PC-9 (cell line): ENCODE measurements at regions of chr7 and their contacts with region 1.

Region 1: GRCh38 chr7:107150375-107151073 is 18.3 kb upstream of the HBP1 start:
- DNase-seq: peak; percentile 45 to 70
- H3K4me3 ChIP-seq: no peak overlapping the region
- H3K27ac ChIP-seq: no peak overlapping the region
- H3K4me1 ChIP-seq: peaks cover 12% of the 10 kb centered on the region; the same call in 1 of the 2 replicates
- H3K27me3 ChIP-seq: no peaks in the 10 kb centered on the region
- CTCF ChIP-seq: peak; percentile 87

Region 2: DNA sequence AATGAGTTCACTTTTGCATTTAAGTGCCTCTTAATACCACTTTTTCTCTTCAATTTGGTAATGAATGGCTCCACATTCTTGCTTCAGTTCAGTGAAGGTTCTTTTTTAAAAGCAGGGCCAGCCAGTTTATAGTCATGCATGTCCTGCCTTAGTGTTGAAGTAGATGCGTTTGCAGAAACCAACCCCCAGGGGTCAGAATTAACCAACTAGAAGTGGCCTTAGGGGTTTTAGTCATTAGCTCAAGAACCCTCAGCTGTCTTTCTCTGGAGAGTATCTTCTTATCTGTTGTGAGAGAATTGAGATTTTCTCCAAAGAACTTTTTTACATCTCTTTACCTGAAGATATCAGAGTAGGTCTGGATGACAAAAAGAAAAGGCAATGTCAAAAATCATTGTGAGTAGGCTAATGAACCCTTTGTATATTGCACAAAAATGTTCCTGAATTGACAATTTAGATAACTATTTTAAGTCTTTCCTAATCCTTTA is 203.2 kb before region 1 on chr7:
- CTCF ChIA-PET with region 1: interaction called, 22 read pairs
- POLR2A ChIA-PET with region 1: no interaction called
- intact Hi-C with region 1: loop called (anchors 1 kb)
- DNase-seq: peak; percentile 50 to 60
- H3K4me3 ChIP-seq: no peak overlapping the region
- H3K27ac ChIP-seq: no peak overlapping the region
- H3K4me1 ChIP-seq: no peaks in the 10 kb centered on the region
- H3K27me3 ChIP-seq: no peaks in the 10 kb centered on the region; the same call in 1 of the 2 replicates
- CTCF ChIP-seq: peak; percentile 75